GM10248 (cell line): ENCODE measurements at regions of chr9 and their contacts with region 1.

Region 1: GRCh38 chr9:37201581-37201980 is 81.2 kb downstream of the ZCCHC7 start:
- DNase-seq: no peak
- CTCF ChIP-seq: no peak

Region 2: DNA sequence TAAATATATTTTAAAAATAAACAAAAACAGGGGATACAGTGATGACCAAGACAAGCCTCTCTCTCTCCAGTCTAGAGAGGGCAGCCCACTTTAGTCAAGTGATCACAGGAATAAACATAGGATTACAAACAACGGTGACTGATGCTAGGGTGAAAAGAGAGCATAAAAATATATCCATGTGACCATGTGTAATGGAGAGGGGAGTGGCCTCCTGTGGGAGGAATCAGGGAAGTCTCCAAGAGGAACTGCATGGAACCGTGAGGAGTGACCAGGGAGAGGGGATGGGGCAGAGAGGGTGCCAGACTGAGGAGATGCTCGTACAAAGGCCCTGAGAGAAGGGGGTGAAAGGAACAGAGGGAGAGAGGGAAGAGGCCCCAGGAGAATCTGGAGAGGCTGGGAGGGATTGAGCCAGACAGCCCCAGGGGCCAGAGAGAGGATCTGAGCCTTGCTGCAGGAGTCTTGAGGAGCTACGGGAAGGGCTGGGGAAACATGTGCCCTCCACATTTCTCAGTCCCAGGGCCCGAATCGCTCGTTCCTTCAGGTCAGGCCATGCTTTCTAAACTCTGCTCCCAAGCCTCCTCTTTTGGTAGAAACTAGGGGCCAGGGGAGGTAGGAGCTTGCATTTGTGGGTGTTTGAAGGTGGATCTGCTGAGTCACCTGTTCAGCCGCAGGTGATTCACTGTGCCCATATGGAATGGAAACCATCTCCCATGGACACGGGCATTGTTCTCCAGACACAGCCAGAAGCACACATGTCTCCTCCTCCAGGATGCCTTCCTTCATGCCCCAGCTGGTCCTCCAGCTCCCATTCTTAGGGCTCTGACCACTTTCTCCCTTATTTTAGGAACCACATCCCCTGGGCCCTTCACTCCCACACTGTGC is 231.3 kb before region 1 on chr9:
- CTCF ChIA-PET with region 1: no interaction called
- POLR2A ChIA-PET with region 1: no interaction called
- DNase-seq: no peak
- CTCF ChIP-seq: no peak

Region 3: DNA sequence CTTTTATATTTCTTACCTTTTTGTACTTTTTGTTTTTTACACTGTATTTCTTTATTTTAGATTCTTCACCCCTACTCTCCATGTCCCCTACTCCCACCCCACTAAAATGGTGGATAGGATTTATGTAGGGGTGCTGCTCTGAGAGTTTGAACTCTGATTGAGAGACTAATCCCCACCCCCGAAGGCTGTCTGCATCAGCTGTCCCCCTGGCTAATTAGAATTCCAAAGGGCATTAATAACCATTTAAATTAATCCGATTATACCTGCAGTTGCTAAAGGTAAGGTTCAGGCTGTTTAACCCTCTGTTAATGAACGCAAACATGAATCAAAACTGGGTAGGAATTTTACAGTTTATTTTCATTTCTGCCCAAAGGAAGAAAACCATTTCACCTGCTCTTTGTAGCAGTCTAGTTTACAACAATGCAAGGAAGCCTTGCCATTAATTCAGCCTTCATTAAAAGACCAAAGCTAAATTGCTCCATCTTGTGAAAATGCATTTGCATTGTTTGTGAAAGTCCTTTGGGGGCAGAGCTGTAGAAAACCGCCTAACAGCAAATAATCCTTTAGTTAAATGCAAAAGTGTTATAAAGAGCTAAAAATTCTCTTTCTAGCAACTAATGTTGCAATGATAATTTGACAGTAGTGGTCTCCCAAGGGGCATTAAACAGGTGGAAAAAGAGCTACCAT is 10.0 kb before region 1 on chr9:
- CTCF ChIA-PET with region 1: interaction called, 21 read pairs
- POLR2A ChIA-PET with region 1: no interaction called
- DNase-seq: no peak
- CTCF ChIP-seq: peak; percentile 47